ENCODE measurements at regions of chr11 and their contacts with region 1.

Region 1: GRCh38 chr11:34174412-34175041 is 69.1 kb downstream of the NAT10 start:
- DNase-seq: no peak
- ATAC-seq: peak; percentile 98
- H3K4me3 ChIP-seq: no peak overlapping the region
- H3K27ac ChIP-seq: no peak overlapping the region
- H3K4me1 ChIP-seq: peaks cover 19% of the 10 kb centered on the region
- H3K27me3 ChIP-seq: no peaks in the 10 kb centered on the region
- CTCF ChIP-seq: peak; percentile 89 to 99 (median 95)
- EP300 ChIP-seq: no peak
- POLR2A ChIP-seq: no peak
- RAD21 ChIP-seq: peak; percentile 98

Region 2: DNA sequence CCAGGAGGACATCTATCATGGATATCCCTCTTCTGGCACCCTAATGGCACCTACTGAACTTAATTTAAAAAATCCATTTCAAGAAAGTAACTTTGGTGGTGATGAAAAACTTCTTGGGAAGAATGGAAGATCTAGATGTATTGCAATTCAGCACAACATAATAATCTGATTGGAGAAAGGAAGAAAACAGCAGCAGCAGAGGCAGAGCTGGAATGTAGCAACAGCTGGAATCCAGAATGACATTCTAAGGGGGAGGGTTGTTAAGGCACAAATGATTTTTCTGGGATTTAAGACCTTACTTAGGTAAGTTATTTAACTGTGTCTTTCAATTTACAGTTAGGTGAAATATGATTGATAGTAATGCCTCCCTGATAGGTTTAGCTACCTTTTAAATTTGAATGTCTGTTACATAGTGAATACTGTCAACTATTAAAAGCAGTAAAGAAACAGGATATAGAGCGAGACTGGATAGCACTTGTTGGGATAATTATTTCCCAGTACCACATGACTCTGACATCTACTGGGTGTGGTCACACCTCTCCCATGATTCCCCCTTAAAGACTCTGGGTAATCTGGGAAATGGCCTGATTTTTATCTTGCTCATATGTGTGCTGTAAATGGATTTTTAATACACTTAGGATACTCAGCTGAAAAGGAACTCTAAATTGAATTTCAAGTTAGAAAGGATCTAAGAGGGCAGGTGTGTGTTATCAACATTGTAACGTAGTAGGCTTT is 111.3 kb before region 1 on chr11:
- CTCF ChIA-PET with region 1: no interaction called
- POLR2A ChIA-PET with region 1: no interaction called
- RAD21 ChIA-PET with region 1: no interaction called
- SMC1A ChIA-PET with region 1: no interaction called
- in situ Hi-C with region 1: no loop called
- intact Hi-C with region 1: no loop called
- DNase-seq: no peak
- ATAC-seq: no peak
- H3K4me3 ChIP-seq: no peak overlapping the region
- H3K27ac ChIP-seq: no peak overlapping the region
- H3K4me1 ChIP-seq: peaks cover 31% of the 10 kb centered on the region
- H3K27me3 ChIP-seq: no peaks in the 10 kb centered on the region
- CTCF ChIP-seq: no peak
- EP300 ChIP-seq: no peak
- POLR2A ChIP-seq: no peak
- RAD21 ChIP-seq: no peak

Region 3: GRCh38 chr11:34086554-34087283 is 87.8 kb before region 1 on chr11:
- CTCF ChIA-PET with region 1: no interaction called
- POLR2A ChIA-PET with region 1: no interaction called
- RAD21 ChIA-PET with region 1: no interaction called
- SMC1A ChIA-PET with region 1: no interaction called
- in situ Hi-C with region 1: no loop called
- intact Hi-C with region 1: no loop called
- DNase-seq: no peak
- ATAC-seq: peak; percentile 44; the same call in 2 of the 3 replicates
- H3K4me3 ChIP-seq: no peak overlapping the region
- H3K27ac ChIP-seq: no peak overlapping the region
- H3K4me1 ChIP-seq: no peaks in the 10 kb centered on the region
- H3K27me3 ChIP-seq: no peaks in the 10 kb centered on the region
- CTCF ChIP-seq: no peak
- EP300 ChIP-seq: no peak
- POLR2A ChIP-seq: no peak
- RAD21 ChIP-seq: no peak

Region 4: GRCh38 chr11:34185926-34186841 is 11.7 kb after region 1 on chr11:
- CTCF ChIA-PET with region 1: interaction called, 15 read pairs
- POLR2A ChIA-PET with region 1: interaction called, 4 read pairs
- RAD21 ChIA-PET with region 1: interaction called, 7 read pairs
- SMC1A ChIA-PET with region 1: interaction called, 18 read pairs
- in situ Hi-C with region 1: no loop called
- intact Hi-C with region 1: no loop called
- DNase-seq: no peak
- ATAC-seq: no peak
- H3K4me3 ChIP-seq: no peak overlapping the region
- H3K27ac ChIP-seq: no peak overlapping the region
- H3K4me1 ChIP-seq: peaks cover 5% of the 10 kb centered on the region
- H3K27me3 ChIP-seq: no peaks in the 10 kb centered on the region
- CTCF ChIP-seq: no peak
- EP300 ChIP-seq: no peak
- POLR2A ChIP-seq: no peak
- RAD21 ChIP-seq: no peak

Region 5: DNA sequence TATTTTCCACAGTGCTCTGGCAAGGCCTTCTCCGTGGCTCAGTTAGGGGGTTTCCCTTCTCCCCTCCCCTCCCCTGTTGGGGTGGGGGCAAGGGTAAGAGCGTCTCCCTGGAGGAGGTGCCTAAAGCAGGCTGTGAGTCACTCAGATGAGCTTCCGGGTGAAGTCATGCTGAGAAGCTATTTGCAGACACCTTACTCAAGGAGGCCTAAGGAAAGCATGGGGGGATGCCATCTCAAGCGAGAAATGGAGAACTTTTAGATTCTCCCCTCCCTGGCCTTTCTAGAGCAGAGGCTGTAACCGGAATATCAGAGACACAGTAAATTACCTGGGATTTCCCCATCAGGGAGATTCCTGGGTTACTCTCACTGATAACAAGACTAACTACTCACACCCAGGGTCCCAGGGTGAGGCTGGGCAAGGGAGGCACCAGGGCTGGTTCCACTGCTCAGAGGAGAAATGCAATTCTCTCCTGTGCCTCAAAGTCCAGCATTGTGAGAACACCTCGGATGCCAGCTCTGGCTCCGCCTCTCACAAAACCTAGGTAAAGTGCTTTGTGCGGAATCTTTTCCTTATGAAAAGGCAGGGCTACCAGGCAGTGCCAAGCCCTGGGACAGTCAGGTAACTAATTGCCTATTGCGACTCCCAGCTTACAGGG is 59.7 kb after region 1 on chr11:
- CTCF ChIA-PET with region 1: interaction called, 16 read pairs
- POLR2A ChIA-PET with region 1: interaction called, 4 read pairs
- RAD21 ChIA-PET with region 1: interaction called, 107 read pairs
- SMC1A ChIA-PET with region 1: interaction called, 192 read pairs
- in situ Hi-C with region 1: no loop called
- intact Hi-C with region 1: loop called (anchors 2 kb)
- DNase-seq: peak; percentile 88
- ATAC-seq: peak; percentile 86
- H3K4me3 ChIP-seq: peak overlapping the region; percentile 29; the same call in 1 of the 2 replicates
- H3K27ac ChIP-seq: peak overlapping the region; percentile 54
- H3K4me1 ChIP-seq: peaks cover 48% of the 10 kb centered on the region
- H3K27me3 ChIP-seq: no peaks in the 10 kb centered on the region
- CTCF ChIP-seq: no peak
- EP300 ChIP-seq: peak; percentile 39 to 59; a peak in 2 of 4 replicates
- POLR2A ChIP-seq: no peak
- RAD21 ChIP-seq: no peak; the same call in 1 of the 2 replicates

Region 6: GRCh38 chr11:34318111-34319037 is 143.8 kb after region 1 on chr11:
- CTCF ChIA-PET with region 1: interaction called, 10 read pairs
- POLR2A ChIA-PET with region 1: no interaction called
- RAD21 ChIA-PET with region 1: interaction called, 5 read pairs
- SMC1A ChIA-PET with region 1: no interaction called
- in situ Hi-C with region 1: no loop called
- intact Hi-C with region 1: no loop called
- DNase-seq: no peak
- ATAC-seq: no peak
- H3K4me3 ChIP-seq: no peak overlapping the region
- H3K27ac ChIP-seq: no peak overlapping the region
- H3K4me1 ChIP-seq: peaks cover 6% of the 10 kb centered on the region; the same call in 1 of the 2 replicates
- H3K27me3 ChIP-seq: no peaks in the 10 kb centered on the region
- CTCF ChIP-seq: no peak
- EP300 ChIP-seq: no peak
- POLR2A ChIP-seq: no peak
- RAD21 ChIP-seq: no peak

Region 7: DNA sequence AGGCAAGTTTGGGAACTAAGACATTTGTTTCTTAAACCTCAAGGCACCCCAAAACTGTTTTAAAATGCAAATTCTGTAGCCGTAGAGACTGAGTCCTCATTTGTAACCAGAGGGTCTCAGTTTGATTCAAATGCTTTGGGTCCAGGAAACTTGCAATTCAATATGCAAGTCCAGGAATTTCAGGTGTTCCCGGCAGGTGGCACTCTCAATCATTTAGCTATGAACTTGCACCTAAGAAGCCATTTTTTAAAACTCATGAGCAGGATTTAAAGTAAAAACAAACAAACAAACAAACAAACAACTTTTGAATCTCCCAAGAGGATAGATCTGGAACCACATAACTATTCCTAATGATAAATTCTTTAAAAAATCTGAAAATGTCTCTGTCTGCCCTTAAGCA is 192.0 kb after region 1 on chr11:
- CTCF ChIA-PET with region 1: interaction called, 15 read pairs
- POLR2A ChIA-PET with region 1: no interaction called
- RAD21 ChIA-PET with region 1: interaction called, 11 read pairs
- SMC1A ChIA-PET with region 1: interaction called, 26 read pairs
- in situ Hi-C with region 1: no loop called
- intact Hi-C with region 1: no loop called
- DNase-seq: no peak
- ATAC-seq: no peak
- H3K4me3 ChIP-seq: no peak overlapping the region
- H3K27ac ChIP-seq: no peak overlapping the region
- H3K4me1 ChIP-seq: no peaks in the 10 kb centered on the region
- H3K27me3 ChIP-seq: no peaks in the 10 kb centered on the region
- CTCF ChIP-seq: peak; percentile 45 to 55 (median 50); a peak in 5 of 6 replicates
- EP300 ChIP-seq: no peak
- POLR2A ChIP-seq: no peak
- RAD21 ChIP-seq: peak; percentile 56